Adrenal gland (tissue), 19 donors: ENCODE measurements at regions of chr14 and their contacts with region 1.

Region 1: DNA sequence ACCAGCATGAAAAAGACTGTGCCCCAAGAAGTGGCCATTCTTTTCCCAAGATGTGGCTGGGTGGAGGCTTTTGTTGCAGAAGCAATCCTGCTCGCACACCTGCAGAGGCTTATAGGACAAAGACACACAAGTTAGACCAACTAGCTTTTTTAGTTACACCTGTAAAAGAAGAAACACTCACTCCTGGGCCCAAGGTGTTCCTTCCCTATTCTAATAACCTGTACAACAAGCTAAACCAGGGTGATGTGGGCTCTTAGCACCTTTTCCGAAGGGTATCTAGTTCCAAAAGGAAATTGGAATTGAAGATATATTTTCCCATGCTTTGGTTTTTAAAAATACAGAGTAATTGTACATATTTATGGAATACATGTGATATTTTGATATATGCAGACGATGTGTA is 31.0 kb downstream of the ENTPD5 start:
- DNase-seq: no peak
- H3K4me3 ChIP-seq: no peak overlapping the region
- H3K27ac ChIP-seq: no peak overlapping the region
- H3K4me1 ChIP-seq: peaks cover 0 to 4% of the 10 kb centered on the region in 2 donors
- H3K27me3 ChIP-seq: no peaks in the 10 kb centered on the region
- CTCF ChIP-seq: no peak
- POLR2A ChIP-seq: no peak

Region 2: DNA sequence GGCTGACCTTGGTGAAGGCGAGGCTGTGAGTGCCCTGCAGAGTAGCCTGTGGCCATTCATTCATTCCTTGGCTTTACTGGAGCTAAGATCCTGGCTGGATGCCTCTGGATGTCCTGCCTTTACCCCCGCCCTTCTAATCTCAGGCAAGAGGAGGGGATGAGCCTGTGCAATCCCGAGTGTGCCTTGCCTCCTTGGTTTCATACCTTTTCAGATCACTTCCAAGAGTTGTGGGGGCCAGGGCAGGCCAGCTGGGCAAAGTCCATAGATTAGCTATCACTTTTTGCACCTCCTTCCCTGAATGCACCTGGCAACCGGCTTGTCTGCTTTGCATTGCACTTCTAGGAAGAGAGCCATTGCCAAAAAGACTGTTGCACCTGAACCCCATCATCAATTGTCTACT is 361.7 kb after region 1 on chr14:
- intact Hi-C with region 1: loop called in 1 of 2 experiments (anchors 5 kb)
- DNase-seq: no peak
- H3K4me3 ChIP-seq: no peak overlapping the region
- H3K27ac ChIP-seq: no peak overlapping the region
- H3K4me1 ChIP-seq: no peaks in the 10 kb centered on the region
- H3K27me3 ChIP-seq: peaks cover 3% of the 10 kb centered on the region
- CTCF ChIP-seq: no peak
- POLR2A ChIP-seq: no peak